ENCODE measurements at regions of chrX and their contacts with region 1.

Region 1: GRCh38 chrX:132092439-132093065 is 35.3 kb downstream of the FRMD7 start:
- DNase-seq: peak in 2 of 3 donors; percentile 49 to 60
- ATAC-seq: peak; percentile 45 to 69
- H3K4me3 ChIP-seq: no peak overlapping the region
- H3K27ac ChIP-seq: no peak overlapping the region
- H3K4me1 ChIP-seq: no peaks in the 10 kb centered on the region
- H3K27me3 ChIP-seq: no peaks in the 10 kb centered on the region

Region 2: GRCh38 chrX:131885558-131885957 is 207.0 kb before region 1 on chrX:
- intact Hi-C with region 1: no loop called
- DNase-seq: no peak
- ATAC-seq: no peak
- H3K4me3 ChIP-seq: no peak overlapping the region
- H3K27ac ChIP-seq: no peak overlapping the region
- H3K4me1 ChIP-seq: no peaks in the 10 kb centered on the region
- H3K27me3 ChIP-seq: no peaks in the 10 kb centered on the region

Region 3: DNA sequence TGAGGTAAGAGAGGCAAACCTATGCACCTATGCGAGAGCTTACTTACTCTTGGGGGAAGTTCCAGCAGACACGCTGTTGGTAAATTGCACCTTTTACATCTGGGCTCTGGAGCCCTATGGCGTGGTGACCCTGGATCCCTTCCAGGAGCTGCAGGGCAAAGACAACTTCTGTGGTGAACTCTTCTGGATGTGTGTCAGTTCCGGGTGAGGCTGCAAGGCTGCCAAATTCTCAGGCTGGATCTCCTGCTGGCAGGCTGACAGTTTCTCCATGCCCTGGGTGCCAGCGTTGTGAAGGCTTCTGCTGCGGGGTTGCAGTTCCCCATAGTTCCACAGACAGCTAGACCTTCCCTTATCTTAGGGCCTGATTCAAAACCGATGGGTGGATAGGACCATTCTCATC is 88.8 kb after region 1 on chrX:
- intact Hi-C with region 1: no loop called
- DNase-seq: peak in 1 of 3 donors; percentile 10
- ATAC-seq: no peak
- H3K4me3 ChIP-seq: no peak overlapping the region
- H3K27ac ChIP-seq: no peak overlapping the region
- H3K4me1 ChIP-seq: no peaks in the 10 kb centered on the region
- H3K27me3 ChIP-seq: no peaks in the 10 kb centered on the region

Region 4: GRCh38 chrX:132219343-132219768 is 126.8 kb after region 1 on chrX and contains the start of gene RAP2C:
- intact Hi-C with region 1: loop called in 1 of 4 experiments (anchors 10 kb)
- DNase-seq: peak; percentile 72 to 90 (median 87)
- ATAC-seq: peak; percentile 84 to 90
- H3K4me3 ChIP-seq: peak within 1 kb of the TSS; percentile 98
- H3K27ac ChIP-seq: peak within 1 kb of the TSS; percentile 99
- H3K4me1 ChIP-seq: no peaks in the 10 kb centered on the region
- H3K27me3 ChIP-seq: no peaks in the 10 kb centered on the region
- total RNA-seq, gene RAP2C: 18.1 to 25.0 (median 20.9) TPM

Region 5: DNA sequence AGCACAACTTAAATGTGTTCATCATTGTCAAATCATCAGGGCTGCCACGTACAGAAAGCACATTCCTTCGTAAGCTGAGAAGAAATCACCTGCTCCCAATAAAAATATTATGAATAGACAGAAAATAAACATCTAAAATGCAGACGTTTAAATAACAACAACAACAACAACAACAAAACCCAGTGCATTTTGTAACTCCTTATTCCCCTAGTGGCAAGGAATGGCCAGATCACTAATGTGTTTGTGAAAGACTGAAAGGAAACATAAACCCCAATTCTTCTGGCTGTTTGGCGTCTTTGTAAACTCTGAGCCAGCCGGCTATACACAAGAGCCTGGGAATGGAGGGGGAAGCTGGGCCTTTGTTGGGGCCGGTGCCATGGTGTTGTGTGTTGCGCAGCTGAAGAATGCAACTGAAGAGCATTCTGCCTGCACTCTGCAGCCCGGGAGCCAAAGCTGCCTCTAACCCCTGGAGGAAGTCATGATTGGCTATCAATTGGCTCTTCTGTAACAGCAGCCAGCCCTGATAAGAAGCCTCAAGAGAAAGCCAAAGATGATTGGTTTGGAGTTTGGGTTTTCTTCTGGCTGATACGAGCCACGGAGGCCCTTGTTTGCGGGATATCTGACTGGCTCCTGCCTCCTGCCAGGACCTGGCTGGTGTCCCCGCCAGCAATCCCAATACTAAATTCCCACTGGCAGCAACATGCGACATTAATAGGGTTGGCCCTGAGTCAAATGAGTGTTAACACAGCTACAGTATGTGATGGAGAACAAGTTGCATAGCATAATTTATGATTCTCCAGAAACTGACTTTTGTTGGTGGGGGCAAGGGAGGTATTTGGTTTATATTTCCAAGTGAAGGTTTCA is 1215.3 kb after region 1 on chrX:
- intact Hi-C with region 1: no loop called
- DNase-seq: peak; percentile 40 to 88 (median 86)
- ATAC-seq: peak; percentile 81 to 98
- H3K4me3 ChIP-seq: no peak overlapping the region
- H3K27ac ChIP-seq: no peak overlapping the region
- H3K4me1 ChIP-seq: no peaks in the 10 kb centered on the region
- H3K27me3 ChIP-seq: no peaks in the 10 kb centered on the region